GM10248 (cell line): ENCODE measurements at regions of chr2 and their contacts with region 1.

Region 1: GRCh38 chr2:190088917-190089316 is 26.4 kb upstream of the MSTN start:
- DNase-seq: peak; percentile 50
- CTCF ChIP-seq: peak; percentile 56

Region 2: GRCh38 chr2:190099890-190100697 is 11.2 kb after region 1 on chr2:
- CTCF ChIA-PET with region 1: interaction called, 26 read pairs
- POLR2A ChIA-PET with region 1: no interaction called
- DNase-seq: no peak
- CTCF ChIP-seq: no peak

Region 3: DNA sequence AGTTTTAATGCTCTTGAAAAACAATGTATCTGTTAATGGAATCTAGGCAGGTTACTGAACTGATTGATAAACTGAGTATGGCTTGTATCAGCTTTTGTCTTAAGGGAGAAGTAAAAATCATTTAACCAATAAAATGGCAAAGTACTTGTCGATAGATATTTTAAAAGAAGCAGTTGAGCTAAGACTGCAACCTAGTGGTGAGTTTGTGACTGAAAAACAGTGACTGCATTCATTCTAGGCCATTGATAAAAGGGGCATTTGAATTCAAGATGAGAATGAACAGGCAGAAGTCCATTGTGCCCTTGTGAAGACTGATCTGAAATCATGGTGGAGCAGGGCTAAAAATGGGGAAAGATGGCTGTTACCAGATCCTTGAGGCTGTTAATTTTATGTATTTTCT is 33.1 kb after region 1 on chr2:
- CTCF ChIA-PET with region 1: interaction called, 13 read pairs
- POLR2A ChIA-PET with region 1: no interaction called
- DNase-seq: peak; percentile 26
- CTCF ChIP-seq: peak; percentile 37

Region 4: DNA sequence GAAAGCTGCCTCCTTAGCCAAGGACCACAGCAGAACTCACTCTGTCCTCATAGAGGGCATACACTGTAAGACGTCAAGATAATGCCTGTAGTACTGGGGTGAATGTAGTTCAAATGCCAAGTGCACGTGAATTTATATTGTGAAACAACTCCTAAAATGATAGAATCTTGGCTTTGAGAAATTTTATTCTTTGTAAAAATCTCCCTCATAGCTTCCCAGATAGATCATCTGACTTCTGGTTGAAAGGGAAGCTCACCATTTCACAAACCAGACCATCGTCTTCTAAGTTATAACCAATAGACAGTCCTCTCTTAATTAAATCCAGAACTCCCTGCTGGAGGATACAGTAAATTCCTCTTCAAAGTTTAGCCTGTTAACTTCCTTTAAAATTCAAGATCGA is 84.5 kb after region 1 on chr2:
- CTCF ChIA-PET with region 1: no interaction called
- POLR2A ChIA-PET with region 1: no interaction called
- DNase-seq: no peak
- CTCF ChIP-seq: no peak